ENCODE measurements at regions of chr16 and their contacts with region 1.

Region 1: DNA sequence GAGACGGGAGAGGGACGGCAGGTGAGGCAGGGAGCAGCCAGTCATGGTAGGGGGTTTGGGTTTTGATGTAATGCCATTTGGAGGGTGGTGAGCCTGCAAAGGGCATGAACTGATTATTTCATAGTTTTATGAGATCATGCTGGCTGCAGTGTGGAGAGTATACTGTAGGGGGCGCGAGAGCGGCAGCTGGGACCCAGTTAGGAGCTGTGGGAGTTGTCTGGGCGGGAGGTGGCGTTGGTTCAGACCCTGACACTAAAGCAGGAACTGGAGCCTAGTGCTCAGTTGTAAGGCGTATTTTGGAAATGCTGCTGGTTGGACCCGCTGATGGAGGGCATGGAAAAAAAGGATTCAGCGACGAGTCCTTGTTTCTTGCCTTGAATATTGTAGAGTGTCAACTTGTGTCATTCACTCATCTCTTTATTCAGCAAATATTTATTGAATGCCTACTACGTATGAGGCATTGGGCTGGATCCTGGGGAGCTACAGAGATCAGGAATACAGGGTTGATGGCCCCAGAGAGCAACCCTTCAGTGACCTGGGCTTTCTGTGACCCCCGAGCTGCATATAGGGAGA is 23.7 kb upstream of the KDM8 start:
- DNase-seq: peak; percentile 85 to 87 (median 86)
- ATAC-seq: peak; percentile 96
- H3K4me3 ChIP-seq: no peak overlapping the region
- H3K27ac ChIP-seq: no peak overlapping the region
- H3K4me1 ChIP-seq: no peaks in the 10 kb centered on the region; a peak in 1 of 5 replicates
- H3K27me3 ChIP-seq: peaks cover 0 to 4% of the 10 kb centered on the region in 2 experiments; a peak in 1 of 5 replicates
- CTCF ChIP-seq: peak; percentile 97 to 99 (median 99)
- EP300 ChIP-seq: no peak
- POLR2A ChIP-seq: no peak
- RAD21 ChIP-seq: peak; percentile 84 to 95

Region 2: DNA sequence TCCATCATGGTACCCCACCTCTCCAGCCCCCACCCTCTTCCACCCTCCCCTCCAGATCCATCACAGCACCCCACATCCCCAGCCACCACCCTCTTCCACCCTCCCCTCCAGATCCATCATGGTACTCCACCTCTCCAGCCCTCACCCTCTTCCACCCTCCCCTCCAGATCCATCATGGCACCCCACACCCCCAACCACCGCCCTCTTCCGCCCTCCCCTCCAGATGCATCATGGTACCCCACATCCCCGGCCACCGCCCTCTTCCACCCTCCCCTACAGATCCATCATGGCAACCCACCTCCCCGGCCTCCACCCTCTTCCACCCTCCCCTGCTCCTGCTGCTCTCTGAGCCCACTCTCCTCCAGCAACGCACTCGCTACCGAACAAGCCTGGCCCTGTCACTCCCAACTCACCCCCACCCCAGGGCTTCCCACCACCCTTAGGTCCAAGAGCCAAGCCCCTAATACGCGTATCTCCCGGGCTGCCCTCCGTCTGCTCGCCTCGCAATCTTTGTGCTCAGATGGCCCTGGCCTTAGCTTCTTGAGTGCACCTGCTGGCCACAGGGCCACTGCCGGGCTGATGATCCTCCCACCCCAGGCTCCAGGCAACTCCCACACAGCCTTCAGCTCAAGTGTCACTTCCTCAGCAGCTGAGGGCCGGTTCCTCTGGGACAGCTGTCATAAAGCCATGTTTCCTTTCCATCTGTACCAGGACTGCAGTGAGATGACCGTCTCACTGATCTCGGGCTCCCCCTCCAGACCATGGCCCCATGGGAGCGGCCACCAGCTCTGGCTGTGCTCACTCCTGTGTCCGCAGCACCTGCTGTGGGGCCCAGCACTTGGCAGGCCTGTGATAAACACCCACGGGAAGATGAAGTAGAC is 49.3 kb after region 1 on chr16:
- CTCF ChIA-PET with region 1: interaction called, 3 read pairs
- POLR2A ChIA-PET with region 1: no interaction called
- in situ Hi-C with region 1: no loop called
- intact Hi-C with region 1: loop called (anchors 5 kb)
- DNase-seq: peak in 3 of 4 experiments; percentile 38 to 57 (median 40)
- ATAC-seq: peak; percentile 84
- H3K4me3 ChIP-seq: no peak overlapping the region
- H3K27ac ChIP-seq: no peak overlapping the region
- H3K4me1 ChIP-seq: peaks cover 0 to 33% of the 10 kb centered on the region in 2 experiments; a peak in 3 of 5 replicates
- H3K27me3 ChIP-seq: no peaks in the 10 kb centered on the region
- CTCF ChIP-seq: peak; percentile 4 to 40 (median 11); a peak in 2 of 6 replicates
- EP300 ChIP-seq: no peak
- POLR2A ChIP-seq: no peak
- RAD21 ChIP-seq: peak; percentile 23 to 54; a peak in 3 of 4 replicates

Region 3: GRCh38 chr16:27253526-27253930 is 73.9 kb after region 1 on chr16:
- CTCF ChIA-PET with region 1: no interaction called
- POLR2A ChIA-PET with region 1: no interaction called
- in situ Hi-C with region 1: no loop called
- intact Hi-C with region 1: no loop called
- DNase-seq: peak in 2 of 4 experiments; percentile 24 to 41
- ATAC-seq: no peak
- H3K4me3 ChIP-seq: no peak overlapping the region
- H3K27ac ChIP-seq: no peak overlapping the region
- H3K4me1 ChIP-seq: peaks cover 0 to 3% of the 10 kb centered on the region in 2 experiments; a peak in 2 of 5 replicates
- H3K27me3 ChIP-seq: no peaks in the 10 kb centered on the region
- CTCF ChIP-seq: no peak
- EP300 ChIP-seq: no peak
- POLR2A ChIP-seq: no peak
- RAD21 ChIP-seq: no peak

Region 4: GRCh38 chr16:27286451-27286850 is 106.9 kb after region 1 on chr16:
- CTCF ChIA-PET with region 1: no interaction called
- POLR2A ChIA-PET with region 1: no interaction called
- in situ Hi-C with region 1: no loop called
- intact Hi-C with region 1: loop called (anchors 10 kb)
- DNase-seq: no peak
- ATAC-seq: no peak
- H3K4me3 ChIP-seq: no peak overlapping the region
- H3K27ac ChIP-seq: no peak overlapping the region
- H3K4me1 ChIP-seq: peaks cover 0 to 2% of the 10 kb centered on the region in 2 experiments; a peak in 1 of 5 replicates
- H3K27me3 ChIP-seq: peaks cover 4 to 10% of the 10 kb centered on the region in 2 experiments; a peak in 4 of 5 replicates
- CTCF ChIP-seq: no peak
- EP300 ChIP-seq: no peak
- POLR2A ChIP-seq: no peak
- RAD21 ChIP-seq: no peak

Region 5: GRCh38 chr16:27367461-27368357 is 188.1 kb after region 1 on chr16:
- CTCF ChIA-PET with region 1: interaction called, 4 read pairs
- POLR2A ChIA-PET with region 1: interaction called, 3 read pairs
- in situ Hi-C with region 1: loop called (anchors 5 kb)
- intact Hi-C with region 1: loop called (anchors 1 kb)
- DNase-seq: peak; percentile 83 to 94 (median 92)
- ATAC-seq: peak; percentile 96
- H3K4me3 ChIP-seq: no peak overlapping the region
- H3K27ac ChIP-seq: no peak overlapping the region
- H3K4me1 ChIP-seq: peaks cover 9 to 11% of the 10 kb centered on the region in 2 experiments
- H3K27me3 ChIP-seq: peaks cover 0 to 9% of the 10 kb centered on the region in 2 experiments; a peak in 2 of 5 replicates
- CTCF ChIP-seq: peak; percentile 82 to 91 (median 86)
- EP300 ChIP-seq: no peak
- POLR2A ChIP-seq: no peak
- RAD21 ChIP-seq: peak; percentile 81 to 95

Region 6: DNA sequence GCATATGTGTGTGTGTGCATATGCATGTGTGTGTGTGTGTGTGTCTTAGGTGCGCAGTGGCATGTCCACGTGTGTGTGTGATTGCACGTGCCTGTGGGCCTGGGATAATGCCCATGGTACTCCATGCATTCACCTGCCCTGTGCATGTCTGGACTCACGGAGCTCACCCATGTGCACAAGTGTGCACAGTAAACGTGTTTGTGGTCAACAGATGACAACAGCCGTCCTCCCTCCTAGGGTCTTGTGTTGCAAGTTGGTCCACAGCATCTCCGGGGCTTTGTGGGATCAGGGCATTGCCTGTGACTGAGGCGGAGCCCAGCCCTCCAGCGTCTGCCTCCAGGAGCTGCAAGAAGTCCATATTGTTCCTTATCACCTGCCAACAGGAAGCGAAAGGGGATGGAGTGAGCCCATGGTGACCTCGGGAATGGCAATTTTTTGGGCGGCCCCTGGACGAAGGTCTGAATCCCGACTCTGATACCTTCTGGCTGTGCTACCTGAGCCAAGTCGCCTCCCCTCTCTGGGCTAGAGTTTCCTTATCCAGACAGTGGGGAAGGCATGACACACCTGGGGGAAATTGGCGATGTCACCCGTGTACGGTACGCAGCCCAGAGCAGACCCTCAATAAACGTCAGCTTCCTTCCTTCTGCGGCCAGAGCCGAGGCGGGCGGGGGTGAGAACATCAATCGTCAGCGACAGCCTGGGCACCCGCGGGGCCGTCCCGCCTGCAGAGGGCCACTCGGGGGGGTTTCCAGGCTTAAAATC is 270.0 kb after region 1 on chr16:
- CTCF ChIA-PET with region 1: no interaction called
- POLR2A ChIA-PET with region 1: no interaction called
- in situ Hi-C with region 1: loop called (anchors 10 kb)
- intact Hi-C with region 1: no loop called
- DNase-seq: no peak
- ATAC-seq: no peak
- H3K4me3 ChIP-seq: no peak overlapping the region
- H3K27ac ChIP-seq: no peak overlapping the region
- H3K4me1 ChIP-seq: peaks cover 0 to 10% of the 10 kb centered on the region in 2 experiments; a peak in 1 of 5 replicates
- H3K27me3 ChIP-seq: peaks cover 20 to 46% of the 10 kb centered on the region in 2 experiments; a peak in 4 of 5 replicates
- CTCF ChIP-seq: no peak
- EP300 ChIP-seq: no peak
- POLR2A ChIP-seq: no peak
- RAD21 ChIP-seq: no peak

Region 7: GRCh38 chr16:27455700-27456099 is 276.1 kb after region 1 on chr16:
- CTCF ChIA-PET with region 1: interaction called, 13 read pairs
- POLR2A ChIA-PET with region 1: no interaction called
- in situ Hi-C with region 1: loop called (anchors 10 kb)
- intact Hi-C with region 1: loop called (anchors 5 kb)
- DNase-seq: peak in 1 of 4 experiments; percentile 13
- ATAC-seq: no peak
- H3K4me3 ChIP-seq: no peak overlapping the region
- H3K27ac ChIP-seq: no peak overlapping the region
- H3K4me1 ChIP-seq: peaks cover 0 to 2% of the 10 kb centered on the region in 2 experiments; a peak in 2 of 5 replicates
- H3K27me3 ChIP-seq: peaks cover 11 to 30% of the 10 kb centered on the region in 2 experiments; a peak in 4 of 5 replicates
- CTCF ChIP-seq: no peak
- EP300 ChIP-seq: no peak
- POLR2A ChIP-seq: no peak
- RAD21 ChIP-seq: no peak

Measured in K562 (cell line).